T-cell (primary cell): ENCODE measurements at regions of chr1 and their contacts with region 1.

Region 1: DNA sequence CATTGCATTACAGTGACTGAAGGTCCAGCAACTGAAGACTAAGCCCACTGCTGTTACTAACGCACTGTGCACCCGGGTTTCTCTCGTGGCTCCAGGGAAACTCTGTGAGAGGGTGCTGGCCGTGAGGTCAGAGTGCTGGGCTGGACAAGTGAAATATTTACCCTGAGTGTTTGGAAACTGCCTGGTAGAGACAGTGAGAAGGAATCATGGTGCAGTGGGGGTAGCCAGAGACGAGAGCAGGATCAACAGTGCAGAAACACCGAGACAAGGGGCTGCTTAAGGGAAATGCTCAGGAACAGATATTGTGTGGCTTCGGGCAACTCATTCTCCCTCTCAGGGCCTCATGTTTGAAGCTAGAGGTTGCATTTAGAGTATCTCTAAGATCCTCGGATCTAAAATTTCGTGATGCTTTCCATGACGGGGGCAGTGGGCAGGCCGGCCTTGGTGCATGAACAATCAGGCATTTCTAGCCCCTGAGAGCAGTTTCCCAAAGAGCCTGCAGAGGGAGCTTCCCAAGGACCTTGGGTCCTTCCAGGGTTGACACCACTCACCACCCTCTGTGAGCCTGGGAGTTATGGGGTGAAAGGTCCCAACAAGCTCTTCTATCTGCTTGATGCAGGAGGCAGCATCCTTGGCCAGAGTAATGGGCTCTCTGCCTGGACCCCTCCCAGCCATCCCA is 9.7 kb downstream of the CD2 start:
- DNase-seq: peak in 4 of 35 experiments; percentile 17 to 68 (median 34)
- ATAC-seq: peak in 3 of 4 experiments; percentile 7 to 17 (median 15)
- H3K4me3 ChIP-seq: peak overlapping the region; percentile 10 to 39
- H3K4me3 Mint-ChIP-seq: peak overlapping the region; percentile 70 to 100 (median 72)
- H3K27ac ChIP-seq: peak overlapping the region; percentile 87
- H3K27ac Mint-ChIP-seq: peak overlapping the region; percentile 99 to 100
- H3K4me1 ChIP-seq: peaks cover 93 to 95% of the 10 kb centered on the region in 2 experiments
- H3K4me1 Mint-ChIP-seq: peaks cover 99% of the 10 kb centered on the region in 3 donors
- H3K27me3 ChIP-seq: no peaks in the 10 kb centered on the region
- H3K27me3 Mint-ChIP-seq: no peaks in the 10 kb centered on the region

Region 2: DNA sequence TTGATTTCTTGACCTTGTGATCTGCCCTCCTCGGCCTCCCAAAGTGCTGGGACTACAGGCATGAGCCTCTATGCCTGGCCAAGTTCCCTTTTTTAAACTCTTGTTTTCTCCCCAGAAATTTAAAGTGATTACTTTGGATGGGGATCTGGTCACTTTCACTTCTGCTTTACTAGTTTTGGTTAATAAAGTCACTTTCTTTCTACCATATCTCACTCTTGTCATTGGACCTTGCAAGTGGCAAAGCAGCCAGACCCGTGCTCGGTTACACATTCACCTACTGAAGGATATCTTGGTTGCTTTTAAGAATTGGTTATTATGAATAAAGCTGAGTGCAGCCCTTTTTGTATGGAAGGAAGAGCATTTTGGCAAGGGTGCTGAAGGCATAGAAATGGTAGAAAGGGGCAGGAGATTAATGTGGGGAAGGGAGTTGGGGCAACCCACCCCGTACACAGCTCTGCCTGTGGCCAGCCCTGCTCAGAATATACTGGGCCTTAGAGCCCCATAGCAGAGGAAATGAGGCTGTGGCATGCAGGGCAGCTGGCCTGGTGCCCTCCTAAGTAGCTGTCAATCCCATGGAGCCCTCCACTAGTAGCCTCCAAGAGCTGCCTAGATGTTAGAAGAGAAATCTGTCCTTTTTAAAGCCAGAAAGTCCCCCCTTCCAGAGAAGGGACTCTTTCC is 31.0 kb after region 1 on chr1:
- CTCF ChIA-PET with region 1: interaction called, 5 to 10 read pairs
- POLR2A ChIA-PET with region 1: no interaction called
- DNase-seq: no peak
- ATAC-seq: no peak
- H3K4me3 ChIP-seq: no peak overlapping the region
- H3K4me3 Mint-ChIP-seq: no peak overlapping the region
- H3K27ac ChIP-seq: no peak overlapping the region
- H3K27ac Mint-ChIP-seq: peak overlapping the region; percentile 23 to 31
- H3K4me1 ChIP-seq: peaks cover 12 to 36% of the 10 kb centered on the region in 2 experiments
- H3K4me1 Mint-ChIP-seq: peaks cover 48 to 70% (median 66%) of the 10 kb centered on the region in 3 donors
- H3K27me3 ChIP-seq: no peaks in the 10 kb centered on the region
- H3K27me3 Mint-ChIP-seq: no peaks in the 10 kb centered on the region

Region 3: GRCh38 chr1:116817582-116818064 is 53.7 kb after region 1 on chr1:
- CTCF ChIA-PET with region 1: interaction called, 10 to 15 read pairs
- POLR2A ChIA-PET with region 1: interaction called, 3 read pairs
- DNase-seq: peak; percentile 39 to 86 (median 60)
- ATAC-seq: peak; percentile 71 to 77 (median 74)
- H3K4me3 ChIP-seq: no peak overlapping the region
- H3K4me3 Mint-ChIP-seq: peak overlapping the region in 2 of 3 donors; percentile 34 to 70
- H3K27ac ChIP-seq: peak overlapping the region; percentile 61
- H3K27ac Mint-ChIP-seq: peak overlapping the region; percentile 64 to 80
- H3K4me1 ChIP-seq: peaks cover 23 to 27% of the 10 kb centered on the region in 2 experiments
- H3K4me1 Mint-ChIP-seq: peaks cover 28 to 33% (median 32%) of the 10 kb centered on the region in 3 donors
- H3K27me3 ChIP-seq: no peaks in the 10 kb centered on the region
- H3K27me3 Mint-ChIP-seq: no peaks in the 10 kb centered on the region

Region 4: GRCh38 chr1:116881879-116882520 is 118.1 kb after region 1 on chr1:
- CTCF ChIA-PET with region 1: interaction called in 1 of 2 experiments, 3 read pairs
- POLR2A ChIA-PET with region 1: interaction called in 1 of 2 experiments, 10 read pairs
- DNase-seq: peak in 6 of 35 experiments; percentile 2 to 41 (median 6)
- ATAC-seq: peak in 1 of 4 experiments; percentile 18
- H3K4me3 ChIP-seq: no peak overlapping the region
- H3K4me3 Mint-ChIP-seq: no peak overlapping the region
- H3K27ac ChIP-seq: no peak overlapping the region
- H3K27ac Mint-ChIP-seq: peak overlapping the region in 1 of 2 donors; percentile 13
- H3K4me1 ChIP-seq: peaks cover 20 to 21% of the 10 kb centered on the region in 2 experiments
- H3K4me1 Mint-ChIP-seq: peaks cover 0 to 4% (median 0%) of the 10 kb centered on the region in 3 donors
- H3K27me3 ChIP-seq: peaks cover 0 to 8% of the 10 kb centered on the region in 2 experiments
- H3K27me3 Mint-ChIP-seq: no peaks in the 10 kb centered on the region